AG04450 (cell line): ENCODE measurements at regions of chr6 and their contacts with region 1.

Region 1: DNA sequence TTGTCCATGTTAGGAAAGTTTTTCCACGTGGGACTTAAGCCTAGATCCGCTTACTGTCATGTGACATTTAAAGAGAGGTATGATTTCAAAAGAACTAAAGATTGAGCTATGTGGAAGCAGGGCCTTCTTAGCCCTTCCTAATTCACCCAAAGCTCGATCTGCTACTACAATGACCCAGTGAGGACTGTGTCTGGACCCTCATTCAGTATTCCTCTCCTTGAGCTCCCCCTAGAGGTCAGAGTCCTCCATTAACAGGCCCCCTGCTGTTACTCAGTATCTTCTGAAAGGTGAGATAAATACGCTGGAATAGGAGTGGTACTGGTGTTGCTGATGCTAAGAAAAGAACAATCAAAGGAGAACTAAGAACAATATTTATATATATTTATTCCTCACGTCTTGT is 414.0 kb downstream of the GJA1 start:
- DNase-seq: peak; percentile 44
- H3K4me3 ChIP-seq: no peak overlapping the region
- H3K27ac ChIP-seq: no peak overlapping the region
- H3K27me3 ChIP-seq: no peaks in the 10 kb centered on the region
- CTCF ChIP-seq: peak; percentile 88

Region 2: DNA sequence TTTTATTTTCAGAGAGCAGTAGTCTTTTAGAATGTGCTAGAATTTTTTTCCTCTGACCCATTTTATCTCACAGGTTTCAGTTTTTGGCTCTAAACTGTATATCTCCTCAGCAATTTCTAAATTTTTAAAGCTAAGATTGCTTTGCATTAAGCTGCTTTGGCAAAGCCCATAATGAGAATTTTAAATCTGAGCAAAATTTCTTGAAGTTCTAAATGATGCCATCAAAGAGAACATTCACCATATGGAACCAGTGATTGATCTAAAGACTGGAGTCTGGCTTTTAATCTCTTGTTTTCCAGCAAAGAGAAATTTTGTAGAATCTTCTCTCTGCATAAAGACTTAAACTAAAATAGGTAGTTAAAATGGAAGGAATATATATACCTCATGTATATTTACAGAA is 828.8 kb before region 1 on chr6:
- CTCF ChIA-PET with region 1: no interaction called
- POLR2A ChIA-PET with region 1: no interaction called
- DNase-seq: no peak
- H3K4me3 ChIP-seq: no peak overlapping the region
- H3K27ac ChIP-seq: no peak overlapping the region
- H3K27me3 ChIP-seq: no peaks in the 10 kb centered on the region
- CTCF ChIP-seq: no peak

Region 3: DNA sequence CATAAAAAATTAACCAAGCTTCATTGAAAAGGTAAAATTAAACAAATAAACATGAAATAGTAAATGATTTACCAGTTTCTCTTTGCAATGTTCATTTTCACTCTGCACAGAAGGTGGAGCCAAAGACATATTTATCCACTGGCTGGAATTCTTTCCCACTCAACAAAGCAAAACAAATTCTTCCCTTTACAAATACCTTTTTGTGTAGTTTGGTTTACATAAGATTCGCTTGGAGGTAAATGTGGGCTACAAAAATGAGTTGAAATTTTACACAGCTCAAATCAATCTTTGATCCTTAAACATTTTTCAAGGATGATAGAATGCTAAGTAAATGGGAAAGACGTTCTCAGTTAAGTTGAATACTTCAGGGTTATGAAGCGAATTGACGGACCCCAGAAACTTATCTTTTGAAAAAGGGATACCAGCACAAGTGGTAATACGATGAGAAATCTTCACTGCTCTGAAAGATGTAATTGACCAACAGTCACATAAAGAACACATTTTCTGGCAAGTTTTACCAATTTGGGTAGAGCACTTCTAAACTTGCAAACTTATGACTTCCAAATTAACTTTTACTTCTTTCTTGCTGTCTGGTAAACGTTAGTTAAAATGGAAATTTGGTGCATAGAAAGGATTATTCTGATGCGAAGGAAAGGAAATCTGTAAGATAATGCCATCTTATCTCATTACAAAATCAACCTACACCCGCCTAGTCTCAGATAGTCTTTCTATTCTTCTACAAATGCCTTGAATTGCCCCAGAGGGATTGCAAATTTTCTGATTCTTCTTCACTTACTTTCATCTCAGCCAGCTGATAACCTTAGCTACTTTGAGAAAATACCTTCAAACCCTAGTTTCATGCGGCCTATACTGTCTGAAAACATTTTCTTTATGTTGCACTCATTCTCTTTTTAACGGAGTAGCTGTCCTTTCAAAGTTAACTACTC is 418.7 kb before region 1 on chr6:
- CTCF ChIA-PET with region 1: interaction called, 101 read pairs
- POLR2A ChIA-PET with region 1: no interaction called
- DNase-seq: peak; percentile 20
- H3K4me3 ChIP-seq: no peak overlapping the region
- H3K27ac ChIP-seq: no peak overlapping the region
- H3K27me3 ChIP-seq: no peaks in the 10 kb centered on the region
- CTCF ChIP-seq: peak; percentile 70

Region 4: GRCh38 chr6:121521892-121522664 is 327.4 kb before region 1 on chr6:
- CTCF ChIA-PET with region 1: interaction called, 16 read pairs
- POLR2A ChIA-PET with region 1: no interaction called
- DNase-seq: peak; percentile 86
- H3K4me3 ChIP-seq: no peak overlapping the region
- H3K27ac ChIP-seq: peak overlapping the region; percentile 86
- H3K27me3 ChIP-seq: no peaks in the 10 kb centered on the region
- CTCF ChIP-seq: no peak

Region 5: GRCh38 chr6:121867095-121867494 is 17.6 kb after region 1 on chr6:
- CTCF ChIA-PET with region 1: interaction called, 12 read pairs
- POLR2A ChIA-PET with region 1: no interaction called
- DNase-seq: no peak
- H3K4me3 ChIP-seq: no peak overlapping the region
- H3K27ac ChIP-seq: no peak overlapping the region
- H3K27me3 ChIP-seq: no peaks in the 10 kb centered on the region
- CTCF ChIP-seq: no peak

Region 6: DNA sequence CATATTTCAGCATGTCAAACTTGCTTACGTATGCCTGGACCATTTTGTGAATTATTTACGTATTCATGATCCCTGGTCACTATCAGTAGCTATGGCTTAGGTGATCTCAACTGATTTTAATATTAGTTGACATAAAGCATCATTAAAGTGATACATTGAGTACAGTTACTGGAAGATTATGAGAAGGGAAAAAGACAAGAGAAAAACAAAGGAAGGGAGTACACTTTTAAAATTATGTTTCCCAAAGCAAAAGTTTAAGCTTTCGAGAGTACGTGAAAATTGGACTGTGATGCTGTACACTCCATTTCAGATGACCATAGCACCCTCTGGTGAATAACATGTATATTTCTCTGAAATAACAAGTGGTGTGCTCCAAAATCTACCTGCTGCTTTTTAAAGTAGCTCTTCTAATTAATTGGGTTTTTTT is 334.9 kb after region 1 on chr6:
- CTCF ChIA-PET with region 1: interaction called, 24 read pairs
- POLR2A ChIA-PET with region 1: no interaction called
- DNase-seq: peak; percentile 11
- H3K4me3 ChIP-seq: peak overlapping the region; percentile 23; the same call in 1 of the 2 replicates
- H3K27ac ChIP-seq: no peak overlapping the region
- H3K27me3 ChIP-seq: no peaks in the 10 kb centered on the region
- CTCF ChIP-seq: peak; percentile 54